Activated CD4-positive, alpha-beta T cell treated with anti-CD3 and anti-CD28 coated beads for 36 hours (primary cell): ENCODE measurements at regions of chr1 and their contacts with region 1.

Region 1: DNA sequence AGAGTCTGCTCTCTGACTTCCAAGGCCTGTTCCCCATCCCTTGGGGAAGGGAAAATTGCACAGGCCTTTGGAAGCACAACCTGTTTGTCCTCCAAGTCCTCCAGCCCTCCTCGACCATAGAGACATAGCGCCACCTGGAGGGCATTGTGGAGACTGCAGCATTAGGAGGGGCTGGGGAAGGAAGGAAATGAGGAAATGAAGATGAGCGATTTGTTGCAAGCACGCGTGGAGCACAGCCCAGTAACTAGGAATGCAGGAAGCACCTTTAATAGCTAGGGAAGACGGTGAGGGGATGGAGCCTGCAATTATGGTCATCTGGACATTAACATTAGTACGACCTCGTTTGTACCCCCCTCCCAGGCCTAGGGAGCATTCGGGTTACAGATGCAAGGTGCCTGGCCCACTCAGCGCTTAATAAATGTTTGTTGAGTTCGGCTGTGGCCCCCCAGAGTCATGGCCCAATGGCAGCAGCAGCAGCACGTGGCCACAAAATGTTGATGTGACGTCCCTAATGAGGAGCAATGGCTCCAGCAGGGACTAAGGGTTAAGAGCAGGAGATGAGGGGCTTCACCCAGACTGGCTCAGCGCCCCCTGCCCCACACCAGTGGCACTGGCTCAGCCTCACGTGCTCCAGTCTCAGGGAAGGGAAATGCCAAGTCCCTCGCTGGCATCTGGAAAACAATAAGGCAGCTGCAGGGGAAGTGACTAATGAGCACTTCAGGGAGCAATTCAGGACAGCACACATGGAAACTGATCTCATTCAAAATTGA is 8.0 kb upstream of the CAMK2N1 start:
- DNase-seq: peak; percentile 88
- ATAC-seq: peak; percentile 31
- H3K4me3 Mint-ChIP-seq: no peak overlapping the region
- H3K27ac Mint-ChIP-seq: no peak overlapping the region
- H3K4me1 Mint-ChIP-seq: no peaks in the 10 kb centered on the region
- H3K27me3 Mint-ChIP-seq: peaks cover 10% of the 10 kb centered on the region

Region 2: DNA sequence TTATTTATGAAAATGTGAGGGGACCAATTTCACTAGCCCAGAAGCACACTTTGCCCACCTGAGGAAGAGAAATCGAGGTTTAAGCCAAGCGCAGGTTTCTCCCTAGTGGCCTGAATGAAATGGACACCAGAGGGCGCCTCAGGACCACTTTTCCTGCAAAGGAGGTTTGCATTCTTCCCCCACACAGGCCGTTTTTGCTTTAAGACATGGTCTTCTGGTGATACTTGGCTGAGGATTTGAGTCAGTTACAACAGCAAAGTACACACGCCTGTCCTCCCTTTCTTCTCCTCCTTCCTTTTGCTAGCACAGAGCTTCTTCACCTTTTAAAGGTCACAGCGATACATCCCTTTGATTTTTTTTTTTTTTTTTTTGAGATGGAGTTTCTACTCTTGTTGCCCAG is 576.0 kb before region 1 on chr1:
- CTCF ChIA-PET with region 1: no interaction called
- POLR2A ChIA-PET with region 1: no interaction called
- intact Hi-C with region 1: loop called in 1 of 2 experiments (anchors 1 kb)
- DNase-seq: peak; percentile 90
- ATAC-seq: peak; percentile 78
- H3K4me3 Mint-ChIP-seq: no peak overlapping the region
- H3K27ac Mint-ChIP-seq: no peak overlapping the region
- H3K4me1 Mint-ChIP-seq: peaks cover 2% of the 10 kb centered on the region
- H3K27me3 Mint-ChIP-seq: no peaks in the 10 kb centered on the region

Region 3: DNA sequence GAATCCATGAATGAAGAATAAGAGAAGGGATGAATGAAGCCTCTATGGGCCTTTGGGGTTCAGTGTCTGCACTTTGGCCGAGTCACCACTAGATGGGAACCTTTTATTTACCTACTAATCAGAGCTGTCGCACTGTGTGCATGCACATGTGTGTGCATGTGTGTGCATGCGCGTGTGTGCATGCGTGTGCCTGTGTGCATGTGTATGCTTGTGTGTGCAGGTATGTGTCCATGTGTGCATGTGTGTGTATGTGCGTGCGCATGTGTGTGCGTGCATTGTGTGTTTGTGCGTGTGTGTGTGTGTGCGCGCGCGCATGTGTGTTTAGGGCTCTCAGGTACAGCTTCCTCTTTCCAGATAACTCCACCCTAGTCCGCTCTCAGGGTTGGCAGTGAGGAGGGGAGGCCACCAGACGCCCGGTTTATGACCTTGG is 328.5 kb before region 1 on chr1:
- CTCF ChIA-PET with region 1: no interaction called
- POLR2A ChIA-PET with region 1: no interaction called
- intact Hi-C with region 1: loop called in 1 of 2 experiments (anchors 5 kb)
- DNase-seq: peak; percentile 42
- ATAC-seq: peak; percentile 57
- H3K4me3 Mint-ChIP-seq: no peak overlapping the region
- H3K27ac Mint-ChIP-seq: no peak overlapping the region
- H3K4me1 Mint-ChIP-seq: no peaks in the 10 kb centered on the region
- H3K27me3 Mint-ChIP-seq: peaks cover 9% of the 10 kb centered on the region

Region 4: DNA sequence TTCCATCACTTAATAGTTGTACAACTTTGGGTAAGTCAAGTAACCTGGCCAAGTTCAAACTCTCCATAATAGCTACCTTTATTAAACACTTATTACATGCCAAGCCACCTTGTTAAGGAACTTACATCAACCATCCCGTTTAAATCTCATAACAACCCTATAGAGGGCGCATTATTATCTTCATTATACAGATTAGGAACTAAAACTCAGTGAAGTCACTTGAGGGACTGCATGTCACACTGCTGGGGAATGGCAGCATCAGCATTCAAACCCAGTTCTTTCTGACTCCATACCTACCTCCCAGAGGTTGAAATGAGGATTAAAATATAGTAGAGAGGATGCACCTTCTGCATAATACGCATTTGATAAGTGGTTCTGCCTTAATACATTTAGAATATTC is 260.6 kb before region 1 on chr1:
- CTCF ChIA-PET with region 1: interaction called, 4 read pairs
- POLR2A ChIA-PET with region 1: no interaction called
- intact Hi-C with region 1: loop called (anchors 5 kb)
- DNase-seq: no peak
- ATAC-seq: peak; percentile 61
- H3K4me3 Mint-ChIP-seq: no peak overlapping the region
- H3K27ac Mint-ChIP-seq: no peak overlapping the region
- H3K4me1 Mint-ChIP-seq: no peaks in the 10 kb centered on the region
- H3K27me3 Mint-ChIP-seq: peaks cover 25% of the 10 kb centered on the region

Region 5: DNA sequence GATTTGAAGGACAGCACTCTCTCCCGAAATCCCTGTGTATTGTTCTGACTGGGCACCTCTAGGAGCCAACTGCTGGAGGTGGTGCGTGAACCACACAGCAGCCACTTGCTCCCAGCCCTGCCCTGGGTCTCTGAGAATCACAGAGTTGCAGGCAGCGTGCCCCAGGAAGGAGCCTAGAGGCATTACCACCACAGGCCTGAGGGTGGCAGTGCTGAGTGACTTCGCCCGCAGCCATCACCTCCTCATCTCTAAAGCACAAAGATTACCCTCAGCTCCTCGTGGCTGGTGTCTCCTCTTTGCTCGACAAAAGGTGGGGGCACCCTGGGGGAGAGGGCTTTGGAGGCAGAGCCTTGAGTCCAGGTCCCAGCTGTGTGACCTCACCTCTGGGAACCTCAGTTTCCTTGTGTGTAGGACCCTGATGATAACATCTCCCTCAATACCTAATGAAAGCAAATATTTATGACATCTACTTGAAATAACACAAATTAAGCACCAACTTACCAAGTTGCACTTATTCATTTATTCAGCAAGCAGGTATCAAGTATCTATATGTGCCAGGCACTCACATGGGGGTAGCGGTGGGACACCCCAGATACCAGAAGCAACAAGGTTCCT is 117.0 kb before region 1 on chr1:
- CTCF ChIA-PET with region 1: interaction called, 4 read pairs
- POLR2A ChIA-PET with region 1: no interaction called
- intact Hi-C with region 1: loop called (anchors 1 to 2 kb)
- DNase-seq: peak; percentile 82
- ATAC-seq: peak; percentile 85
- H3K4me3 Mint-ChIP-seq: no peak overlapping the region
- H3K27ac Mint-ChIP-seq: no peak overlapping the region
- H3K4me1 Mint-ChIP-seq: peaks cover 7% of the 10 kb centered on the region
- H3K27me3 Mint-ChIP-seq: peaks cover 17% of the 10 kb centered on the region

Region 6: DNA sequence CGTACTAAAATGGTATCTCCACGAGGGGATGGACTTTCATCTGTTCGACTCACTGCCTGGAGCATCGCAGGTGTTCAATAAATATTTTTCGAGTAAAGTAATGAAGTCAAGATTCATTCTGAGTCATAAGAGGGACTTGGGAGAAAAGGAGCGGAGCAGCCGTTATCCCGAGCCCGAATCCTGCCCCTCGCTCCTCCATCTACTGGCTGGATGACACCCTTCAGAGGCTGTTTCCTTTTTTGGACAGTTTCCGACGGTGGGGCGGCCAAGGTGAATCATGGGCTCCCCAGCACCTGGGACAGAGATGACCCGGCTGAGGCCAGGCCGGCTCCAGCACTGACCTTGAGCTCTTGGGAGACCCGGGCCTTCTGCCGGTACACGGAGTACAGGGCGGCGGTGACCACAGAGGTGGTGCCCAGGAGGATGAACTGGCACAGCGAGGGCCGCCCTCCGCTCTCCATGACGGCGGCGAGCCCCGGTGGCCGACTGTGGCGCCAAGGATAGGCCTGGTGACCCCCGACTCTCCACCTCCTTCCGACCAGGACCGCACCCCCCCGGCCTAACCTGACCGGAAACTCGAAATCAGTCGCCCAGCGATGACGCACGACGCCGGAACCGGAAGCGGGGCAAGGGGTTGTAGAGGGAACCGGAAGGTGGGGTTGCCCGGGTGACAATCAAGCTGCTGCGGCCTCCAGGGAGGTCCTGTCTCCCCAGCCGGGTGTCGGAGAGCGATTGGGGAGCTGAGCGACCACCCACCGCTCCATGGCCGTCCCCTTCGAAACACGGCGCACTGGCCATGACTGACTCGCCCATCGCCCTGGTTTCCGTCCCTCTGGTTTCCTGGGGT is 13.8 kb after region 1 on chr1 and contains the start of gene MUL1:
- CTCF ChIA-PET with region 1: interaction called, 4 read pairs
- POLR2A ChIA-PET with region 1: no interaction called
- intact Hi-C with region 1: loop called (anchors 1 kb)
- DNase-seq: peak; percentile 96
- ATAC-seq: peak; percentile 96
- H3K4me3 Mint-ChIP-seq: peak within 1 kb of the TSS; percentile 79
- H3K27ac Mint-ChIP-seq: peak within 1 kb of the TSS; percentile 65
- H3K4me1 Mint-ChIP-seq: peaks cover 17% of the 10 kb centered on the region
- H3K27me3 Mint-ChIP-seq: peaks cover 2% of the 10 kb centered on the region
- total RNA-seq, gene MUL1: 9.0 to 13.1 TPM